CD4-positive, alpha-beta T cell (primary cell): ENCODE measurements at regions of chr21 and their contacts with region 1.

Region 1: DNA sequence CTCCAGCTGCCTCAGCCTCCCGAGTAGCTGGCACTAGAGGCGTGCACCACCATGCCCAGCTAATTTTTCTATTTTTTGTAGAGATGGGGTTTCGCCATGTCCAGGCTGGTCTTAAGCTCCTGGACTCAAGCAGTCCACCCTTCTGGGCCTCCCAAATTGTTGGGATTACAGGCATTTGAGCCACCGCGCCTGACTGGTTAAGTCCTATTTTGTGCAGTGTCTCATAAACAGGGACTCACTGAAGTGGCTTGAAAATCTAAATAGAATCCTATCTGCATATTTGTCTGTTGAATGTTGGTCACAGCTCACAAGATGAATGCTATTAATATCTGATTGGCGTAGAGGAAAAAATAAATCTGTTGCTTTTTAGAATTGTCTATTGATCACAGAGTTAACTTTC is 5.9 kb upstream of the CHAF1B start:
- DNase-seq: no peak
- ATAC-seq: no peak
- H3K4me3 ChIP-seq: no peak overlapping the region
- H3K4me3 Mint-ChIP-seq: no peak overlapping the region
- H3K27ac ChIP-seq: no peak overlapping the region
- H3K27ac Mint-ChIP-seq: peak overlapping the region; percentile 63
- H3K4me1 ChIP-seq: no peaks in the 10 kb centered on the region
- H3K4me1 Mint-ChIP-seq: no peaks in the 10 kb centered on the region
- H3K27me3 ChIP-seq: no peaks in the 10 kb centered on the region
- H3K27me3 Mint-ChIP-seq: no peaks in the 10 kb centered on the region
- CTCF ChIP-seq: no peak

Region 2: DNA sequence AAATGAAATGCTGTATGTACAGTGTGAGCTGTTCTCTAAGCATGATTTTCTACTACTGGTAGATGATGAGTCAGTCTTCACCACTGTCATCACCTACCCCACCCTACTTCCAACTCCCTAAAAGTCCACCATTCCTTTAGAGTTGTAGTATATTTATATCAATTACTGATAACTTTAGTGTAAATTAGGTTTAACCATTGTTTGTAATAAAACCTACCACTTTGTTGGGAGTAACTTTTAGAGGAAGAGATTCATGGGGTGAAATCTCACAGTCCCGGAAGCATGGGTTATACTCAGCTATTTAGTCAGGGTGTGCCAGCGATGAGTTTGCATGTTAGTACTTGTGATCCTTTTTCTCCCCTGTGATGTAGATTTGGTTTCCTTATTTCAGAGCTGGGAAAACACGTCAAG is 42.1 kb before region 1 on chr21:
- CTCF ChIA-PET with region 1: no interaction called
- POLR2A ChIA-PET with region 1: no interaction called
- intact Hi-C with region 1: loop called in 1 of 2 experiments (anchors 5 kb)
- DNase-seq: no peak
- ATAC-seq: no peak
- H3K4me3 ChIP-seq: no peak overlapping the region
- H3K4me3 Mint-ChIP-seq: no peak overlapping the region
- H3K27ac ChIP-seq: no peak overlapping the region
- H3K27ac Mint-ChIP-seq: no peak overlapping the region
- H3K4me1 ChIP-seq: no peaks in the 10 kb centered on the region
- H3K4me1 Mint-ChIP-seq: peaks cover 28% of the 10 kb centered on the region
- H3K27me3 ChIP-seq: no peaks in the 10 kb centered on the region
- H3K27me3 Mint-ChIP-seq: no peaks in the 10 kb centered on the region
- CTCF ChIP-seq: no peak